Heart left ventricle (tissue), 16 donors: ENCODE measurements at regions of chr2 and their contacts with region 1.

Region 1: GRCh38 chr2:215828517-215829184 is 184.7 kb downstream of the MREG start:
- DNase-seq: peak in 3 of 5 donors; percentile 26 to 42 (median 32)
- ATAC-seq: no peak
- H3K4me3 ChIP-seq: no peak overlapping the region
- H3K27ac ChIP-seq: no peak overlapping the region
- H3K4me1 ChIP-seq: peaks cover 0 to 47% (median 5%) of the 10 kb centered on the region in 12 donors
- H3K27me3 ChIP-seq: no peaks in the 10 kb centered on the region
- CTCF ChIP-seq: peak in 11 of 12 donors; percentile 16 to 63 (median 43)
- POLR2A ChIP-seq: no peak

Region 2: DNA sequence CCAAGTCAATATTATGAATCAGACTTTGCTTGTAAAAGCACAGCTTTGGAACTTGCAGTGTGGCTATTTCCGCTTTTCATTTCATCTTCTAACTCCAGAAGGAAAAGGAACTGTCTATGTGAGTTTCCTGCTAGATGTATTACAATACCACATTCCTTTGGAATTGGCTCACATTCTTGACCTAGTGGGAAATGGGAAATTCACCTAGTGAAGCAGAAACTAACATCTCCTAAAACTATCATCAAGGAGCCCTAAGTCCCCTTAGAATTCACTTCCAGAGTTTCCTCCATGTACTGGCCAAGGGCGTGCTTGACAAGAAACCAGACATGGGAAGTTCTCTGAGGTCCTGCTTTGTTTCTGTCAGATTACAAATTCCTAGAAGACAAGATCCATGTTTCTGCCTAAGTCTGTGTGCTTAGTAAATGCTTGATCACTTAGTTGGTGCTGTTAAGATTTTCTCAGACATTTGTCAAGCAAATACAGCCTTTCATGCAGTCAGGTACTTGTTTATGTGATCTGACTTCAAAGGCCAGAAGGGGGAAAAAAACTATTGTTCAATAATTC is 117.1 kb before region 1 on chr2:
- intact Hi-C with region 1: loop called in 1 of 10 experiments (anchors 10 kb)
- DNase-seq: peak in 1 of 5 donors; percentile 16
- ATAC-seq: peak; percentile 45 to 85 (median 72)
- H3K4me3 ChIP-seq: no peak overlapping the region
- H3K27ac ChIP-seq: peak overlapping the region in 11 of 12 donors; percentile 0 to 76 (median 37)
- H3K4me1 ChIP-seq: peaks cover 0 to 36% (median 19%) of the 10 kb centered on the region in 12 donors
- H3K27me3 ChIP-seq: no peaks in the 10 kb centered on the region
- CTCF ChIP-seq: no peak
- POLR2A ChIP-seq: no peak

Region 3: GRCh38 chr2:215940645-215941184 is 112.1 kb after region 1 on chr2:
- intact Hi-C with region 1: no loop called
- DNase-seq: no peak
- ATAC-seq: no peak
- H3K4me3 ChIP-seq: no peak overlapping the region
- H3K27ac ChIP-seq: no peak overlapping the region
- H3K4me1 ChIP-seq: no peaks in the 10 kb centered on the region
- H3K27me3 ChIP-seq: no peaks in the 10 kb centered on the region
- CTCF ChIP-seq: no peak
- POLR2A ChIP-seq: no peak